AG04449 (cell line): ENCODE measurements at regions of chr17 and their contacts with region 1.

Region 1: GRCh38 chr17:40287494-40288369 is at the start of gene CDC6:
- DNase-seq: peak; percentile 91
- H3K4me3 ChIP-seq: peak within 1 kb of the TSS; percentile 75
- CTCF ChIP-seq: no peak

Region 2: GRCh38 chr17:40099619-40100418 is 187.9 kb before region 1 on chr17:
- CTCF ChIA-PET with region 1: no interaction called
- POLR2A ChIA-PET with region 1: no interaction called
- DNase-seq: no peak
- H3K4me3 ChIP-seq: peak overlapping the region; percentile 87
- CTCF ChIP-seq: no peak

Region 3: DNA sequence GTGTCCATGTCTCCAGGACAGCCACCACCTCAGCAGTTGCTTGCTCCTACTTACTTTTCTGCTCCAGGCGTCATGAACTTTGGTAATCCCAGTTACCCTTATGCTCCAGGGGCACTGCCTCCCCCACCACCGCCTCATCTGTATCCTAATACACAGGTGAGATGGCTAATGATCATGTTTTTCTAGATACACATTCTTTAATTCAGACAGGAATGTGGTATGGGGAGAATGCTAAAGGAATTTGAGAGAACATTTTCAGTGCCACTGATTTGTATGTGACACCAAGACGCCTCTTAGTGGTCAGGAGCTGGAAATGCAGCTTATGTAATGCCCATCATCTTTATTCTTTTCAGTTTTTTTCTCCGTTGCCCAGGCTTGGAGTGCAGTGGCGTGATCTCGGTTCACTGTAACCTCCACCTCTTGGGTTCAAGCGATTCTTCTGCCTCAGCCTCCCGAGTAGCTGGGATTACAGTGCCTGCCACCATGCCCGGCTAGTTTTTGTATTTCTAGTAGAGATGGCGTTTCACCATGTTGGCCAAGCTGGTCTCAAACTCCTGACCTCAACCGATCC is 119.4 kb before region 1 on chr17:
- CTCF ChIA-PET with region 1: interaction called, 20 read pairs
- POLR2A ChIA-PET with region 1: no interaction called
- DNase-seq: peak; percentile 26
- H3K4me3 ChIP-seq: no peak overlapping the region
- CTCF ChIP-seq: peak; percentile 55

Region 4: GRCh38 chr17:40191237-40192208 is 96.2 kb before region 1 on chr17:
- CTCF ChIA-PET with region 1: interaction called, 290 read pairs
- POLR2A ChIA-PET with region 1: no interaction called
- DNase-seq: no peak
- H3K4me3 ChIP-seq: peak overlapping the region; percentile 66
- CTCF ChIP-seq: peak; percentile 89

Region 5: DNA sequence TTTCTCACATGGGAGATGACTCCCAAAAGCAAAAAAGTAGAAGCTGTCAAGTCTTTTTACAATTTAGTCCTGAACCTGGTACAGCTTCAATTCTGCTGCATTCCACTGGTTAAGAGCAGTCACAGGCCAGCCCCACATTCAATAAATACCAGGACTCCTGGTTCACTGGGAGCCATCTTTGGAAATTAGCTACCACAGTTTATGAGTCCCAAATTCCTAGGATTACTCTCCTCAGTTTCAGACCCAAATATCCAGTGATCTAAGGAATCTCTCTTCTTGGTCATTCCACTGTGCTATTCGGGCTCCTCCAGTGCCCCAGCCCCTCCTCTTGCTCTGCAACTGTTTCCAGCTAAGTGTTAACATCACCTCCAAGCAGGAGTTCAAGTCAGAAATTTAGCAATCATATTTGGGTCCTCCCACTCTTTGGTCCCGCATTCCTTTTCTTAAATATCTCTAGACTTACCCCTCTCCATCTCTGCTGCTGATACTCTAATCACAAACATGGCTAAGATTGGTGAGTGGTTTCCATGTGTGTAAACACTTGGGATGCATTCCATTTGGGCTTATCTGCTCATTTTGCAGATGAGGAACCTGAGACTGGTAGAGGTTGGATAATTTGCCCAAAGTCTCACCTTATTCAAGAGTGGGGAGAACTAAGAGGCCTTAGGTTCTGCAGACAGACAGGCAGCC is 78.2 kb before region 1 on chr17:
- CTCF ChIA-PET with region 1: interaction called, 290 read pairs
- POLR2A ChIA-PET with region 1: interaction called, 3 read pairs
- DNase-seq: peak; percentile 69
- H3K4me3 ChIP-seq: no peak overlapping the region
- CTCF ChIP-seq: no peak

Region 6: GRCh38 chr17:40303009-40303657 is 15.4 kb after region 1 on chr17:
- CTCF ChIA-PET with region 1: interaction called, 75 read pairs
- POLR2A ChIA-PET with region 1: no interaction called
- DNase-seq: no peak
- H3K4me3 ChIP-seq: no peak overlapping the region
- CTCF ChIP-seq: peak; percentile 58

Region 7: DNA sequence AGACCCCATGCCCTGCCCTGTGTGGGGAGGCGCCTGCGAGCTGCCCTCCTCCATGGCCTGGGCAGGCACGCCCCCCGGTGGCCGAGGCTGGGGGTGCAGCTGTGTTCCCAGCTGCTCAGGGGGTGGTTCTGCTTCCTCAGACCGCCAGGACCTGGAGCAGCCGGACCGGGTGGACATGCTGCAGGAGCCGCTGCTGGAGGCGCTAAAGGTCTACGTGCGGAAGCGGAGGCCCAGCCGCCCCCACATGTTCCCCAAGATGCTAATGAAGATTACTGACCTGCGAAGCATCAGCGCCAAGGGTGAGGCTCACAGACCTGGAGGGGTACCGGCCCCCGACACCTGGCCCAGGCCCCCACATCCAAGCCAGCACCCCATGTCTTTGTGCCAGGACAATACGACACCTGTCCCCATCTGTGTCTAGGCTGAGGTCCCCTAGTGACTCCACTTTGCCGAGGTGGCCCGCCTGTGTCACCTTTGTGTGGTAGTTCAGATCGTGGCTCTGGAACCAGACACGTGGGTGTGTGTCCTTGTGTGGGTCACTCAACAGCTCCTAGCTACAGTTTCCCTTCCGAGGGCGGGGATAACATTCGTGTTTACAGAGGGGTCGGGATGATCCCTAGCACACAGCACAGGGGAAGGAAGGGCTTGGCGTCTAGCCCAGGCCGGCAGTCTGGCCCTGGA is 67.5 kb after region 1 on chr17:
- CTCF ChIA-PET with region 1: interaction called, 28 read pairs
- POLR2A ChIA-PET with region 1: no interaction called
- DNase-seq: no peak
- H3K4me3 ChIP-seq: no peak overlapping the region
- CTCF ChIP-seq: peak; percentile 98